Upper lobe of right lung (tissue), 1 donor: ENCODE measurements at regions of chr1 and their contacts with region 1.

Region 1: DNA sequence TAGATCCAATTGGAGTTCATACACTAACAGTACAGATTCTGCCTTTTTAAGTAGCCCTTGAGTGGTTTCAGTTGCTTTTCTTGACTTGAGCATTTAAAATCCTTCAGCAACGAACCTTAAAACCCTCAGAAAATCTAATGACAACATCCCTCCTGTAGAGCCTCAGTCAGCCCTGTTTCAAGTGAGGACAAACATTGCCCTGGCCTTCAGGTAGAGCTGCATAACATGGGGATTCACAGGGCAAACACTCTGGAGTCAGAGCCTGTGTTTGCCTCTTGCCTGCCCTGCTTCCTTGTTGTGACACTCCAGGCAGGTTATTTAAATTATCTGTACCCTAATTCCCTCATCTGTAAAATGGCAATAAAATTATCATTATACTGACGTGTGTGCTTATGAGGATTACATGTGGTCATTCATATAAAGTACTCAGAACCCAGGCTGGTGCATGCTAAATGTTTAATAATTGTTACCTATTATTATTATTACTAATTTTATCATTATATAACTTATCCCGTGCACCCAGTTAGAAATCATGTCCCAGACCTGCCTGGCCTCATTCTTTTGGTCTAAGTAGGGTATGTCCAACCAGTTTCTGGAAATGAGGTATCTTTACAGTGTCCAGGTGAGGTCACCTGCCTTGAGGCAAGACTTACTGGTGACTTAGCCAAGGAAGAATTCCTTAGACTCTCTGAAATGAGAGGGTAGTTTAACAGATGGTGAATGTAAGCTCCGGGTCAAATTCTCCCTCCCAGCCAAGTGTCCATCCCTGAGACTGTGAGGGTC is 96.3 kb upstream of the KCNA3 start:
- DNase-seq: no peak
- ATAC-seq: peak; percentile 24
- H3K4me3 ChIP-seq: no peak overlapping the region
- H3K27ac ChIP-seq: no peak overlapping the region
- H3K4me1 ChIP-seq: no peaks in the 10 kb centered on the region
- H3K27me3 ChIP-seq: no peaks in the 10 kb centered on the region
- CTCF ChIP-seq: no peak

Region 2: DNA sequence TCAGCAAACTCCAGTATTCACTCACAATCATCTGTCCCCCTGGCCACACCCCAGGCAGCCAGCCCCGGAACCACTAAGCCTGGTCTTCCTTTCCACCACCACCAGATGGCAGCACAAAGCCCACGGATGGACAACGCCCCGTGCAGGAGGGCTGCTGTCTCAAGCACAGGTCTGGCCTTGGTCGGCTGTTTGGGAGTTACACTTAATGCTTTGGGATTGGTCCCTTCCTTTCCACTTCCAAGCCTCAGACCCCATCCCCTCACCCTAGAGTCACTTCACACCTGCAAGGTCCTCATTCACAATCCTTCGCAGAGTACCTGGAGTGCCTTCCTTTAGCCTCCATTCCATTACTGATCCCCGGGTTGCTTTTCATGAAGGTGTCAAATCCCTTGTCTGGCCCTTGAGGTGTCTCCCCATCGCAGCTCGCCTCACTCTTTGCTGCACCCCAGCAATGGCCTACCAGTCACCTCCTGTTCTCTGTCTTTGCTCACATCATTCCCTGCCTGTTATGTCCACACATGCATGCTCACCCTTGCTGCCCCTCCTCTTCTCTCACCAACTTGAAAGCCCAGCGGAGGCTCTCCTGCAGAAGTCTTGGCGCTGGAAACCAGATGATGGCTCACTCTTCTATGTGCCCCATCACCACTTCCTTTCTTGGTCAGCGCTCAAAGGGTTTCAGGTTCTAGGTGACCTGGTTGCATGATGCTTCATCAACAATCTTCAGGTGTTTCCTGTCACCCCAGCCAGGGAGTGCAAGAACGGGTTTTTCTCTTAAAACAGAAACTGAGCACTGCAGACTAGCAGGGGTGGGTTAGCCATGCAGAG is 140.0 kb before region 1 on chr1:
- intact Hi-C with region 1: loop called (anchors 5 kb)
- DNase-seq: peak; percentile 87
- ATAC-seq: peak; percentile 93
- H3K4me3 ChIP-seq: no peak overlapping the region
- H3K27ac ChIP-seq: no peak overlapping the region
- H3K4me1 ChIP-seq: peaks cover 18% of the 10 kb centered on the region
- H3K27me3 ChIP-seq: no peaks in the 10 kb centered on the region
- CTCF ChIP-seq: peak; percentile 87

Region 3: DNA sequence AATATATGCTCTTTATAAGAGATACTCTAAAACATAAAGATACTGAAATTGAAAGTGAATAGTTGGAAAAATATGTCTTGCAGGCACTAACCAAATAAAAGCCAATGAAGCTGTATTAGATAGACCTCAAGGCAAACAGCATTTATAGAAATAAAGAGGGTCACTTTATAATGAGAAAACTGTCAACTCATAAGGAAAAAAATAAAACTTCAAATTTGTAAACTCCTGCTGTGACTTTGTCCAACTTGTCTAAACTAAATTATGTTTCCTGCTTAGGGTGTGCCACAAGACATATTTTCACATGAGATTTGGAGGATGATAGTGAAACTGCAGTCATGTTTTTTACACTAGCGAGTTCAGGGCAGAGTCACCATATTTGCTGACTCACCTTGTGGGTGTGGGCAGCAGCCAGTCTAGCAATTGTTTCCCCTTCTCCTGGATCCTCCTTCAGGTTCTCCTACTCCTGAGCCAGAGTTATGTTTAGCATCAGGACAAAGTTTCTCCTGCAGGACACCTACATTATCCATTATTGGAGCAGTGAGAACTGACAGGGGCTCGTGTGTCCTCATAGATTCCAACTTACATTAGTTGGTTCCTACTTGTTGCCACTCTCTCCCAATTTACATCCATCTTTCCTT is 145.8 kb after region 1 on chr1:
- intact Hi-C with region 1: no loop called
- DNase-seq: no peak
- ATAC-seq: peak; percentile 55
- H3K4me3 ChIP-seq: no peak overlapping the region
- H3K27ac ChIP-seq: no peak overlapping the region
- H3K4me1 ChIP-seq: no peaks in the 10 kb centered on the region
- H3K27me3 ChIP-seq: no peaks in the 10 kb centered on the region
- CTCF ChIP-seq: no peak